ENCODE measurements at regions of chr2 and their contacts with region 1.

Region 1: GRCh38 chr2:181810823-181811695 is 80.5 kb upstream of the ITPRID2 start:
- DNase-seq: peak; percentile 81 to 98
- H3K4me3 ChIP-seq: no peak overlapping the region
- H3K27ac ChIP-seq: peak overlapping the region; percentile 74
- H3K4me1 ChIP-seq: peaks cover 32% of the 10 kb centered on the region
- H3K27me3 ChIP-seq: no peaks in the 10 kb centered on the region
- CTCF ChIP-seq: no peak

Region 2: DNA sequence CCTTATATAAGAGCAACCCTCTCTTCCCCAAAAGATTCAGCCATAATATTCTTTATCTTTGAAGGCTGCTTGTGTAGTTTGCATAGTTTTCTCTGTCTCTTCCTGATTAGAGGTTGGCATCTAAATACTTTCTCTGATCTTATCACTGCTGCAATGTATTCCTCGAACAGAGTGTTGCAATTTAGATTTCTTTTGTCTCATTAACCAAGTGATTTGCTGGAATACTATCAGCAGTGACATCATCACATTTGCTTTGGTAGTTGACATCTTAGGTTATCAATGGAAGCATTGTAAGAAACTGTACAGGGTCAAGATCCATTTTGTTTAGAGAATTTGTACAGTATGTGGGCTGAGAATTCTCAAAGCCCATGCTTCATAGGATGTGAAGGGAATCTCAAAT is 58.8 kb before region 1 on chr2:
- CTCF ChIA-PET with region 1: interaction called, 9 read pairs
- POLR2A ChIA-PET with region 1: no interaction called
- intact Hi-C with region 1: loop called (anchors 2 kb)
- DNase-seq: peak in 1 of 2 experiments; percentile 88
- H3K4me3 ChIP-seq: no peak overlapping the region
- H3K27ac ChIP-seq: no peak overlapping the region; the same call in 1 of the 2 replicates
- H3K4me1 ChIP-seq: peaks cover 11% of the 10 kb centered on the region
- H3K27me3 ChIP-seq: no peaks in the 10 kb centered on the region
- CTCF ChIP-seq: no peak

Region 3: GRCh38 chr2:181785691-181786344 is 25.2 kb before region 1 on chr2:
- CTCF ChIA-PET with region 1: no interaction called
- POLR2A ChIA-PET with region 1: interaction called, 3 read pairs
- intact Hi-C with region 1: loop called (anchors 1 kb)
- DNase-seq: peak; percentile 47 to 96
- H3K4me3 ChIP-seq: peak overlapping the region; percentile 14
- H3K27ac ChIP-seq: peak overlapping the region; percentile 66
- H3K4me1 ChIP-seq: peaks cover 77% of the 10 kb centered on the region
- H3K27me3 ChIP-seq: no peaks in the 10 kb centered on the region
- CTCF ChIP-seq: no peak

Region 4: DNA sequence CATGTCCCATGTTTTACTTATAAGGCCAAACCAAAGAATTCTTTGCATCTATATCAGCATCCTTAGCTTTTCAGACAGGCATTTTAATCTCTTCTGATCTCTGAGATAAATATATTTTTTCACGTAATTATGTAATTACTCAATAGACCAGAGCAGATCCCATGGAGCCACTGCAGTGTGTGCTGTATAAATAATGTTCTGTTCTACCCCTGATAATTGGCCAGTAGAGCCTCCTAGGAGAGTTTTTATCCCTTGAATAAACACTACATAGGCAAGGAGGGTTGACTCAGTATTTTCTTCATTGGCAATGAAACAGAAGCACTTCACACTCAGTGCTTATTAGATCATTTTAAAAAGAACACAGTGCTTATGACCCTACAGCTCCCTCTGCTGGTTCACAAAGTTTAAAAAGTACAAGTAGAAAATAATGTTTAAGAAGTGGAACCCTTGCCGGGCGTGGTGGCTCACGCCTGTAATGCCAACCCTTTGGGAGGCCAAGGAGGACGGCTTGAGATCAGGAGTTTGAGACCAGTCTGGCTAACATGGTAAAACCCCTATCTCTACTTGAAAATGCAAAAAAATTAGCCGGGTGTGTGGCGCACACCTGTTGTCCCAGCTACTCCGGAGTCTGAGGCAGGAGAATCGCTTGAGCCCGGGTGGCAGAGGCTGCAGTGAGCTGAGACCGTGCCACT is 266.5 kb after region 1 on chr2:
- CTCF ChIA-PET with region 1: no interaction called
- POLR2A ChIA-PET with region 1: no interaction called
- intact Hi-C with region 1: loop called (anchors 5 kb)
- DNase-seq: peak; percentile 47 to 76
- H3K4me3 ChIP-seq: no peak overlapping the region
- H3K27ac ChIP-seq: no peak overlapping the region
- H3K4me1 ChIP-seq: 0 out of 2 replicates have a peak, but pooled peaks cover 4% of the 10 kb centered on the region
- H3K27me3 ChIP-seq: no peaks in the 10 kb centered on the region
- CTCF ChIP-seq: peak; percentile 98